Activated T-helper 1 cell treated with anti-CD3 and anti-CD28 coated beads, Interleukin-12 subunit alpha, Interleukin-12 subunit beta, Interleukin-2, Interleukin-4 antibody, amounts not matched to agents 30 ng/mL and 10 ng/mL and 1 ng/mL, durations not matched to agents 14 hours and 24 hours and 36 hours (primary cell): ENCODE measurements at regions of chr3 and their contacts with region 1.

Region 1: GRCh38 chr3:153621953-153622352 is 459.9 kb downstream of the RAP2B start:
- DNase-seq: no peak
- H3K4me3 Mint-ChIP-seq: peak overlapping the region; percentile 41
- H3K27ac Mint-ChIP-seq: peak overlapping the region; percentile 87
- H3K4me1 Mint-ChIP-seq: peaks cover 61% of the 10 kb centered on the region
- H3K27me3 Mint-ChIP-seq: no peaks in the 10 kb centered on the region

Region 2: DNA sequence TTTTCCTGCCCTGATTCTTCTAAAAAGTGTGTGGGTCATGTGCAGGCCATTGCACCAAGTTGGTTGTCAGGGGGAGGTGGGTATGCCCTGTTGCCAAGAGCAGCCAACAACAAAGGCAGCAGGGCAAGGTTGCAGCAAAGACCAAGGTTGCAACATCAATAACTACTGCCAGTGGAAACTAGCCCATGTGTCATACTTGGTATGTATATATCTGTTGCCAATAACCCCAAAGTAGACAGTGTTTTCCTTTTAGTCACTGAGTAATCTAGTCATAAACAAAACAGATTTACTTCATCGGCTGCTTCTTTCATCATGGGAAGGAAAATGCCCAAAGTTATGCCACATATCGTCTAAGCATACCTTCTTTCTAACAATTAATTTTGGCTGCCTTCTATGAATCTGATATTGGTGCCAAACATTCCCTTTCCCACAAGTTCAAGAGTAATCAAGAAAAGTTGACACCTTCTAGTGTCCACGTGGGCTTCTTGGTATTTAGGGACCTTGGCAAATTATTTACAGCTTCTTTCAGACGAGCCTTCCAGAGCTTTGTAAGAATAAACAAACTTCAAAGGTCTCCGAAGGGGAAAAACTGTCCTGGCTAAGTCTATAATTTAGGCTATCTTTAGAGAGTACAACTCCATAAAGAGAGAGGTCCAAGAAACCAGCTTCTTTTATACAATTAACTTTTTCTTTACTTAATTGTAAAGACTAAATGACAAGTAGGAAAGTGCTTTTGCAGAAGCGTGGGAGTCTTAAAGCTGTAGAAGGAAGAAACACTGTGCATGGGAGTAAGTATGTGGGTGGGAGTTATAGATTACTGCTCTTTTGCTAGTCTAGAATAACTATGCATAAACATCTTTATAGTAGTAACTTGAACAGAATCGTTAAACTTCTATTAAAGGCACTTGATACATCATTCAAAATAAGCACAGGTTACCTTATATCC is 1363.2 kb before region 1 on chr3:
- intact Hi-C with region 1: loop called (anchors 10 kb)
- DNase-seq: peak; percentile 62
- H3K4me3 Mint-ChIP-seq: peak overlapping the region; percentile 81
- H3K27ac Mint-ChIP-seq: peak overlapping the region; percentile 98
- H3K4me1 Mint-ChIP-seq: peaks cover 90% of the 10 kb centered on the region
- H3K27me3 Mint-ChIP-seq: no peaks in the 10 kb centered on the region

Region 3: GRCh38 chr3:153161138-153161713 is 460.7 kb before region 1 on chr3:
- intact Hi-C with region 1: loop called (anchors 1 kb)
- DNase-seq: peak; percentile 91
- H3K4me3 Mint-ChIP-seq: peak overlapping the region; percentile 90
- H3K27ac Mint-ChIP-seq: peak overlapping the region; percentile 97
- H3K4me1 Mint-ChIP-seq: peaks cover 47% of the 10 kb centered on the region
- H3K27me3 Mint-ChIP-seq: no peaks in the 10 kb centered on the region

Region 4: GRCh38 chr3:153319705-153320554 is 302.0 kb before region 1 on chr3:
- intact Hi-C with region 1: loop called (anchors 2 kb)
- DNase-seq: no peak
- H3K4me3 Mint-ChIP-seq: no peak overlapping the region
- H3K27ac Mint-ChIP-seq: peak overlapping the region; percentile 72
- H3K4me1 Mint-ChIP-seq: peaks cover 21% of the 10 kb centered on the region
- H3K27me3 Mint-ChIP-seq: peaks cover 1% of the 10 kb centered on the region

Region 5: GRCh38 chr3:153595186-153595815 is 26.7 kb before region 1 on chr3:
- intact Hi-C with region 1: loop called (anchors 1 kb)
- DNase-seq: no peak
- H3K4me3 Mint-ChIP-seq: no peak overlapping the region
- H3K27ac Mint-ChIP-seq: no peak overlapping the region
- H3K4me1 Mint-ChIP-seq: no peaks in the 10 kb centered on the region
- H3K27me3 Mint-ChIP-seq: no peaks in the 10 kb centered on the region

Region 6: DNA sequence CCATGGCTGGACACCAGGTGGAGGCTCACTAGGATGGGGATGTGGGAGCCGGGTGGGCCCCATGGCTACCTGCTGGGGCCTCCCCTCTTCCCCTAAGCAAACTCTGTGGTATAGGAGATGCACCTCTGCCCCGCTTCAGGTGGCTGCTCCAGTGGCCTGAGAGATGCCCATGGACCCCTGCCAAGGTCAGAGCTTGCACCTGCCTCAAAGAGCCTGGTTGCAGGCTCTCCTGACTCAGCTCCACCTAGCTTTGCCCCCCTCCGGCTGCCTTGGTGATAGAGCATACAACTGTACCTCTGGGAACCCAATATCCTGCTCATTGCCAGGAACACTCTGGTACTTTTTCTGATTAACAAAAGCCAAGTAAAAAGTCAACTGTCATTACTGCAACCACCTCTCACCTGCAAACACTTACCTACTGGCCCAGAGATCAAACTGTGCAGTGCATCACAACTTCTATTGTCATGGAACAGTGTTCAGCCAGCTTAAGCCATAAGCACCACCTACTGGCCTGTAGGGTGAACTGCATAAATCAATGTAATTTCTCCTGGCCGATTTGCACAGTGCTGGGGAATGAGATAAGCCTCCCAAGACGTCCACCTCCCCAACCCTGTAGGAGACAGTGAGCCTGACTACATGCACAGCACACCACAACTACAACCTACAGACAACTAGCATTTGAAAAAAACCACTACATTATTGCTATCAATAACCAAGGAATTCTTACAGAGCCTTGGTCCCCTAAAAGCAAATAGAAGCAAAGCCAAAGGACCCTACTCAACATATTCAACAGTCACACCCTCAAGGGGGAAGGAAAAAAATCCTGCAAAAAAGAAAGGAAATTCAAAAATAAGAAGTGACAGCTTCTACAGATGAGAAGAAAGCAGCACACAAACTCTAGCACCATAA is 146.9 kb after region 1 on chr3:
- intact Hi-C with region 1: loop called (anchors 1 kb)
- DNase-seq: peak; percentile 35
- H3K4me3 Mint-ChIP-seq: no peak overlapping the region
- H3K27ac Mint-ChIP-seq: no peak overlapping the region
- H3K4me1 Mint-ChIP-seq: no peaks in the 10 kb centered on the region
- H3K27me3 Mint-ChIP-seq: peaks cover 17% of the 10 kb centered on the region